T-cell (primary cell): ENCODE measurements at regions of chr13 and their contacts with region 1.

Region 1: GRCh38 chr13:111174377-111175114 is 59.4 kb downstream of the ARHGEF7 start:
- DNase-seq: no peak
- ATAC-seq: no peak
- H3K4me3 ChIP-seq: no peak overlapping the region
- H3K4me3 Mint-ChIP-seq: peak overlapping the region in 1 of 3 donors; percentile 76
- H3K27ac ChIP-seq: no peak overlapping the region
- H3K27ac Mint-ChIP-seq: peak overlapping the region; percentile 71 to 96
- H3K4me1 ChIP-seq: peaks cover 46 to 59% of the 10 kb centered on the region in 2 experiments
- H3K4me1 Mint-ChIP-seq: peaks cover 75 to 83% (median 82%) of the 10 kb centered on the region in 3 donors
- H3K27me3 ChIP-seq: no peaks in the 10 kb centered on the region
- H3K27me3 Mint-ChIP-seq: no peaks in the 10 kb centered on the region

Region 2: GRCh38 chr13:109436055-109436622 is 1738.4 kb before region 1 on chr13:
- CTCF ChIA-PET with region 1: no interaction called
- POLR2A ChIA-PET with region 1: no interaction called
- DNase-seq: no peak
- ATAC-seq: no peak
- H3K4me3 ChIP-seq: no peak overlapping the region
- H3K4me3 Mint-ChIP-seq: no peak overlapping the region
- H3K27ac ChIP-seq: no peak overlapping the region
- H3K27ac Mint-ChIP-seq: no peak overlapping the region
- H3K4me1 ChIP-seq: no peaks in the 10 kb centered on the region
- H3K4me1 Mint-ChIP-seq: no peaks in the 10 kb centered on the region
- H3K27me3 ChIP-seq: peaks cover 0 to 3% of the 10 kb centered on the region in 2 experiments
- H3K27me3 Mint-ChIP-seq: peaks cover 0 to 9% of the 10 kb centered on the region in 2 donors

Region 3: DNA sequence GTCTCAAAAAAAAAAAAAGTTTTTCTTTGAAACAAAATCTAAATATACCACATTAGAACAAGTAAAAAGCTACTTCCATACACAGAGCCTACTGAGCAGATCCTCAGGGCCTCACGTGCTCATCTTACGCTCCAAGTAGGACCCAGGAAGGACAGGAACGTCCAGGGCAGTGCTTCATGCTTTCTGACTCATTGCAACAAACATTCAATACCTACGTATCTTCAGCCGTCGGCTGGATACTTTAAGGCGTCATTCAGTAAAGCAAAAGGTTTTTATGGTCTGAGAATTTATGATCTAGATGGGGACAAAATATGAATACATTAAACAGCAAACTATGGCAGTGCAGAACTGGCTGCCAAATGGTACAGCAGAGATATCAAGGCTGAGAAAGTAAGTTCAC is 489.2 kb before region 1 on chr13:
- CTCF ChIA-PET with region 1: no interaction called
- POLR2A ChIA-PET with region 1: no interaction called
- DNase-seq: no peak
- ATAC-seq: no peak
- H3K4me3 ChIP-seq: no peak overlapping the region
- H3K4me3 Mint-ChIP-seq: no peak overlapping the region
- H3K27ac ChIP-seq: no peak overlapping the region
- H3K27ac Mint-ChIP-seq: no peak overlapping the region
- H3K4me1 ChIP-seq: no peaks in the 10 kb centered on the region
- H3K4me1 Mint-ChIP-seq: peaks cover 0 to 3% (median 0%) of the 10 kb centered on the region in 3 donors
- H3K27me3 ChIP-seq: no peaks in the 10 kb centered on the region
- H3K27me3 Mint-ChIP-seq: no peaks in the 10 kb centered on the region

Region 4: DNA sequence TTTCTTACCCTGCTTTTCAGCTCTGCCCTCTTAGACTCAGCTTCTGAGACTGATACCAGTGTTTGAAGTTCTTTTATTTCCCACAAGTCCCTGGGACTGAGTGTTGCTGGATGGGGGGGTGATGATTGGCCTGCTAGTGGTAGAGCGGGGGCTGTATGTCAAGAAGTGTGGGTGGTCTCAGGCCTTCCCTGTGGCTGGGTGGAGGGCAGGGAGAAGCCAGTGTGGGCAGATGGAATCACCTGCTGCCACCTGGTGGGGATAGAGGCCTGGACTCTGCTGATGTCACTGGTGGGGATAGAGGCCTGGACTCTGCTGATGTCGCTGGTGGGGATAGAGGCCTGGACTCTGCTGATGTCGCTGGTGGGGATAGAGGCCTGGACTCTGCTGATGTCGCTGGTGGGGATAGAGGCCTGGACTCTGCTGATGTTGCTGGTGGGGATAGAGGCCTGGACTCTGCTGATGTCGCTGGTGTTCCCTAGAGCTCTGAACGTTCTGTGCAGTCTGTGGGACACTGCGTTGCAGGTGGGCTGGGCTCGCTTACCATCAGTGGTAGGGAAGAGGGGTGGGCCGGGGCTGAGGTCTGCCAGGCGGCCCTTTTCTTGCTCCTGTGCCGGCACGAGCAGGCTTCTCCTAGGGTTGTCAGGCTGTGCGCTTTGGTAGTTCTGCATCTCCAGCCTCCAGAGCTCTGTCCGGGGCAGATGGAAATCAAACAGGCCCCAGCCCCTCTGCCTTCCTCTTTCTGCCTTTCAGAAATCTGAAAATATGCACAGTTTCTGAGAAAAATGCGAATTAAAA is 41.8 kb after region 1 on chr13:
- CTCF ChIA-PET with region 1: interaction called in 1 of 2 experiments, 16 read pairs
- POLR2A ChIA-PET with region 1: no interaction called
- DNase-seq: peak in 29 of 35 experiments; percentile 9 to 65 (median 35)
- ATAC-seq: peak; percentile 57 to 75 (median 68)
- H3K4me3 ChIP-seq: no peak overlapping the region
- H3K4me3 Mint-ChIP-seq: no peak overlapping the region
- H3K27ac ChIP-seq: no peak overlapping the region
- H3K27ac Mint-ChIP-seq: no peak overlapping the region
- H3K4me1 ChIP-seq: peaks cover 2 to 15% of the 10 kb centered on the region in 2 experiments
- H3K4me1 Mint-ChIP-seq: peaks cover 52 to 58% (median 52%) of the 10 kb centered on the region in 3 donors
- H3K27me3 ChIP-seq: no peaks in the 10 kb centered on the region
- H3K27me3 Mint-ChIP-seq: no peaks in the 10 kb centered on the region

Region 5: GRCh38 chr13:111370570-111371535 is 196.3 kb after region 1 on chr13:
- CTCF ChIA-PET with region 1: no interaction called
- POLR2A ChIA-PET with region 1: no interaction called
- DNase-seq: no peak
- ATAC-seq: no peak
- H3K4me3 ChIP-seq: no peak overlapping the region
- H3K4me3 Mint-ChIP-seq: no peak overlapping the region
- H3K27ac ChIP-seq: no peak overlapping the region
- H3K27ac Mint-ChIP-seq: no peak overlapping the region
- H3K4me1 ChIP-seq: peaks cover 0 to 3% of the 10 kb centered on the region in 2 experiments
- H3K4me1 Mint-ChIP-seq: peaks cover 2 to 17% (median 7%) of the 10 kb centered on the region in 3 donors
- H3K27me3 ChIP-seq: peaks cover 0 to 2% of the 10 kb centered on the region in 2 experiments
- H3K27me3 Mint-ChIP-seq: peaks cover 0 to under 1% of the 10 kb centered on the region in 2 donors

Region 6: DNA sequence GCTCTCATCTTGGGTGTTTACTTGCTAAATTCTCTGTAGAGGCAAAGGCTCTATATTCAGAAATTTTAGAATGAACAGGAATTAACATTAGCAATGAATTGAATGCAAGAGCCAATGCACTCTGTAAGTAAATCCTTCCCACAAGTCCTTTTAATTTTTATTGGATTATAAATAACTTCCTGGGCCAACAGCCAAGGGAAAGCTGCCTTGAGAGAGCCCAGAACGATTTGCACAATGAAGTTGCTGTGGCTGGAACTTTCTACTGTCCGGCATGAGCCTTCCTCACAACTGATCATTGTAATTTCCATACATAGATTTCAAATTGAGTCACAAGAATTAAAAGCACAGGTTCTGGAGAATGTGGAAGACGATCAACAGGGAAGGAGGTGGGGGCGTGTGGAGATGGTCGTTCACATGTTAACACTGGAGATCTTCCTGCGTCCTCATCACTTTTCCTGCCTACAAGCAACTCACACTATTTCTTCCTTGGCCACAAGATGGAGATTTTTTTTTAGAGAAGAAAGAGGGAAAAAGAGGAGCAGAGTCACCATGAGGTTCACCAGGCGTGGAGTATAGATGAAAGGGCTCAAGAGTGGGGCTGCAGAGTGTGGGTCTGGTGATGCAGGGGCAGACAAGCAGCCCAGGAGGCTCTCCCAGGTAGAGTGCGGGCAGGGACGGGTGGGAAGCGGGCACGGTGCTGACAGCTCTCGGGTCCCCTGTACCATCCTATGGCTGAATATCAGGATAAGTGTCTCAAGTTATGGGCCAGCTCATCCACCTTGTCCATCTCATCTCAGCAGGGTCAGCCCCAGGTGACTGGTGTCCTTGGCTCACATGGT is 1003.1 kb after region 1 on chr13:
- CTCF ChIA-PET with region 1: no interaction called
- POLR2A ChIA-PET with region 1: no interaction called
- DNase-seq: no peak
- ATAC-seq: no peak
- H3K4me3 ChIP-seq: no peak overlapping the region
- H3K4me3 Mint-ChIP-seq: no peak overlapping the region
- H3K27ac ChIP-seq: no peak overlapping the region
- H3K27ac Mint-ChIP-seq: no peak overlapping the region
- H3K4me1 ChIP-seq: no peaks in the 10 kb centered on the region
- H3K4me1 Mint-ChIP-seq: no peaks in the 10 kb centered on the region
- H3K27me3 ChIP-seq: peaks cover 0 to 9% of the 10 kb centered on the region in 2 experiments
- H3K27me3 Mint-ChIP-seq: peaks cover 0 to 3% of the 10 kb centered on the region in 2 donors